ENCODE measurements at regions of chr5 and their contacts with region 1.

Region 1: DNA sequence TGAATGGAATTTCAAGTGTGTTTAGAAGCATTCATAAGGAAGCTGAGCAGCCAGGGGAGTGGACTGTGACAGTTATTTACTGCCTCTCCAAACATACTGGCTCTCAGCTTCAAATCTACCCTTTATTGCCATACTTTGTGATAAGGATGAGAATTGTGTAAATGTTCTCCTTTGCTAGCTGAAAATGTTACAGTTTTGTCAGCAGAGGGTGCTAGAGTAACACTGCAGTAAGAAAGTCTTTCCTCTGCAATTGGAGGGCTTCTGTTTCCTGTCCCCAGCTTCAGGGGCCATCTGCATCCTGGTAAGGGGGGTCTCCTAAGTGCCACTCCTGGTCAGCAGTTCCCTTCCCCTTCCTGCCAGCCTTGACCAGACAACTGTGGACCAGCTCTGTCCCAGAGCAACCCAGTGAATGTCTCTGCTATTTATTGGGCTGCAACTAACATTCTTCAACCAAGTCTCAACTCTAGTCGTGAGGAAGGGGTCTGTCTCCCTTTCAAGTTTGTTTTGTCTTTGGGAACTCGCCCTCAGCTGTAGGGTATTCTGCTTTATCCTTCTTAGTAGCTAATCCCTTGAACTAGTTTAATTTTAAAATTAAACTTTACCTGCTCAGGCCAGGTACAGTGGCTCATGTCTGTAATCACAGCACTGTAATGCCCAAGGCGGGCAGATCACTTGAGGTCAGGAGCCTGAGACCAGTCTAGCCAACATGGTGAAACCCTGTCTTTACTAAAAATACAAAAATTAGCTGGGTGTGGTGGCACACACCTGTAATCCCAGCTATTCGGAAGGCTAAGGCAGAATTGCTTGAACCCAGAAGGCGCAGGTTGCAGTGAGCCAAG is 45.3 kb downstream of the RAPGEF6 start:
- DNase-seq: peak; percentile 38
- H3K4me3 ChIP-seq: no peak overlapping the region
- H3K27ac ChIP-seq: no peak overlapping the region
- H3K27me3 ChIP-seq: no peaks in the 10 kb centered on the region
- CTCF ChIP-seq: peak; percentile 95

Region 2: DNA sequence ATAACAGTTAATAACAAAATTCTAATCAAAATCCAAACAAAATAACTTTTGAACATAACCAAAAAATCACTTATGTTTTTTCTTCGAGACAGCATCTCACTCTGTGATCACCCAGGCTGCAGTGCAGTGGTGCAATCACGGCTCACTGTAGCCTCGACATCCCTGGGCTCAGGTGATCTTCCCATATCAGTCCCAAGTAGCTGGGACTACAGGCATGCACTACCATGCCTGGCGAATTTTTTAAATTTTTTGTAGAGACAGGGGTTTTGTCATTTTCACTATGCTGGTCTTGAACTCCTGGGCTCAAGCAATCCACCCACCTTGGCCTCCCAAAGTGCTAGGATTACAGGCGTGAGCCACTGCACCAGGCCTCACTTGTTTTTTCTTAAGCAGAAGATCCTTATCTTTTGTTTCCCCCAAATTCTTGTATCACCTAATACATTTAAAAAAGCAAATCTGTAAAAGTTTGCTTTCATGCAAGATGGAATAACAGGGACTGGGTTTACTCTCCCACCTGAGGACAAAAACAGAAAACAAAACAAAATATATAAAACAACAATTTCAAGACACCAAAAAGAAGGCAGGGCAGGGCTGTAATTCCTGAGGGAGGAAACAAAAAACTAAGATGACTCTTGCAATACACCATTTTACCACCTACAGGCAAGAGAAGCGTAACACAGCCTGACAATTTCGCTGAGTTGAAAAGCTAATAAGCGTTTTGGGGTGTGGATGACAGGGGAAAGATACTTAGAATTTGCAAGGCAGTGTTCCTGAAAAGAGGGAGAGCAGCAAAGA is 26.1 kb before region 1 on chr5:
- CTCF ChIA-PET with region 1: interaction called, 12 read pairs
- POLR2A ChIA-PET with region 1: no interaction called
- DNase-seq: no peak
- H3K4me3 ChIP-seq: no peak overlapping the region
- H3K27ac ChIP-seq: no peak overlapping the region
- H3K27me3 ChIP-seq: no peaks in the 10 kb centered on the region
- CTCF ChIP-seq: no peak

Region 3: GRCh38 chr5:131610198-131611063 is 20.7 kb after region 1 on chr5:
- CTCF ChIA-PET with region 1: interaction called, 18 read pairs
- POLR2A ChIA-PET with region 1: interaction called, 3 read pairs
- DNase-seq: peak; percentile 83
- H3K4me3 ChIP-seq: no peak overlapping the region
- H3K27ac ChIP-seq: peak overlapping the region; percentile 96
- H3K27me3 ChIP-seq: no peaks in the 10 kb centered on the region
- CTCF ChIP-seq: no peak

Region 4: GRCh38 chr5:131628990-131629389 is 39.3 kb after region 1 on chr5:
- CTCF ChIA-PET with region 1: interaction called, 12 read pairs
- POLR2A ChIA-PET with region 1: no interaction called
- DNase-seq: no peak
- H3K4me3 ChIP-seq: no peak overlapping the region
- H3K27ac ChIP-seq: no peak overlapping the region
- H3K27me3 ChIP-seq: no peaks in the 10 kb centered on the region
- CTCF ChIP-seq: no peak

Region 5: DNA sequence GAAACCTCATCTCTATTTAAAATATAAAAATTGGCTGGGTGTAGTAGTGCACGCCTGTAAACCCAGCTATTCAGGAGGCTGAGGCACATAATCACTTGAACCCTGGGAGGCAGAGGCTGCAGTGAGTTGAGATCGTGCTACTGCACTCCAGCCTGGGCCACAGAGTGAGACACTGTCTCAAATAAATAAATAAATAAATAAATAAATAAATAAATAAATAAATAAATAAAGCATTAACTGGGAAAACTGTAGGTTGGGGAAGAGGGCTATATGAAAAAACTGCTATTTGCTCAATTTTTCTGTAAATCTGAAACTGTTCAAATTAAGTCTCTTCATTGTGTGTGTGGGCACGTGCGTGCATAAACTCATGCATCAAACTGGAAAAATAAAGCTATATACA is 105.2 kb after region 1 on chr5:
- CTCF ChIA-PET with region 1: interaction called, 11 read pairs
- POLR2A ChIA-PET with region 1: no interaction called
- DNase-seq: no peak
- H3K4me3 ChIP-seq: no peak overlapping the region
- H3K27ac ChIP-seq: no peak overlapping the region
- H3K27me3 ChIP-seq: no peaks in the 10 kb centered on the region
- CTCF ChIP-seq: no peak

Region 6: DNA sequence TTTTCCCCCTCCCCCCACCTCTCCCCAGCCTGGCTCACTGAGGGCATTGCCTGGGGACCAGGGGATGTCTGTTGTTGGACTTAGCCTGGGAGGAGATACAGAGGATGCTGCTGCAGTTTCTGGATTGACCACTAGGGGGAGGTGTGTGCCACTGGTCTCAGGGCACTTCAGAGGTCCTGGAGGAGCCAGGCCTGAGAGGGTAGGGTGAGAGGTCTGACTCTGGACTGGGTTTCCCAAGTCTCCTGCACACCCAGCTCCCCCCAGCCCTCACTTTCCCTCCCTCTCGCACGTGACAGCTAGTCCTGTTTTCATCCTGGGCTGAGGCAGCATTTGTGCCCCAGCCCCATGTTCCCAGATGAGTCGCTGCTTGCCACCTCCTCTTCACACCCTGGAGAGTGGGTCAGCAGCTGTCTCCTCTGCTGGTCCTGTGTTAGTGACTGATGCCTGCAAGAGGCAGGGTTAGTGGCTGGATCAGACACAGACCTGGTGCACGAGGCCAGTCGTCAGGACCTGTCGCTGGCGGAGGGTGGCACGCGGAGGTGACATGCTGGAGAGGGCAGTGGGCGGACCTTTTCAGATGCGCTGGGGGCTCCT is 475.1 kb after region 1 on chr5:
- CTCF ChIA-PET with region 1: interaction called, 55 read pairs
- POLR2A ChIA-PET with region 1: no interaction called
- DNase-seq: peak; percentile 43
- H3K4me3 ChIP-seq: no peak overlapping the region
- H3K27ac ChIP-seq: no peak overlapping the region
- H3K27me3 ChIP-seq: peaks cover 4% of the 10 kb centered on the region
- CTCF ChIP-seq: peak; percentile 93

Measured in AG04450 (cell line).